OCI-LY7 (cell line): ENCODE measurements at regions of chr10 and their contacts with region 1.

Region 1: GRCh38 chr10:95236068-95236903 is 42.2 kb downstream of the ACSM6 start:
- DNase-seq: peak; percentile 79
- H3K4me3 ChIP-seq: peak overlapping the region; percentile 37
- H3K27ac ChIP-seq: peak overlapping the region; percentile 96
- H3K4me1 ChIP-seq: peaks cover 55% of the 10 kb centered on the region
- CTCF ChIP-seq: peak; percentile 33; the same call in 1 of the 2 replicates

Region 2: DNA sequence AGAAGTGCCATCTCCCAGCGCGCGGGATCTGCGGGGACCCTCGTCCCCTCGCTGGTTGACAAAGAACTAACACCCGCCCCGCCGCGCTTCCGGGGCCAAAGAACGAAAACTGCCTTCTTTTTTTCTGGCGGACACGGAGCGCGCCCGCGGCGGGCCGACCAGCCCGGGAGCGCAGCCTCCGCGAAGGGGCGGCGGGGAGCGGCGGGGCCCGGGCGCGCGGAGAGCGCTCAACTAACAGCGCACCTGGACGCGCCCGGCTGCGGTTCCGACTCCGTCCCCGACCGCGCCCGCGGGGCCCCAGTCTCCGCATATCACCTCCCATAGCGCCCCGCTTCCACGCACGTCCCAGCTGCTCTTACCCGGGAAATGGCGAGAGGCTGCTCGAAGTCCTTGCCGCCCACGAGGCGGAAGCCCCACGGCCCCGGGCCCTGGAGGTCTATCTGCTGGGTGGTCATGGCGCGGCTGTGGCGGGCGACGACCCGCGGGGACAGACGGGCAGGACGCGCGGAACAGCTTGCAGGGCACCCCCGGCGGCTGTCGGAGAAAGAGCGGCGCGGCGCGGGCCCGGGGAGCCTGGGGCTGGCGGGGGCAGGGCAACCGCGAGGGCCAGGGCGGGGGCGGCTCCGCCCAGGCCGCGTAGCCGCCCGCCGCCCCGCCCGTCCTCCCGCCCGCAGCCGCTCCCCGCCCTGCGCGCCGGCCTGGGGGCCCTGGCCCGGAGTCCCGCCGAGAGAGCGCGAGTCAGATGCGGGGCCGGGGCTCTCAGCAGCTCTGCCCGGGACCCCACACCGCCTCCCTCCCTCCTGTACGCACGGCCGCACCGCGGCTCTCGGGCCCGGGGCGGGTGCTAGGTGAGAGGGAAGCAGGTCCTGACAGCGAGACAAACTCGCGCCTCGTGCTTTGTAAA is 54.4 kb after region 1 on chr10 and contains the start of gene PDLIM1:
- CTCF ChIA-PET with region 1: no interaction called
- POLR2A ChIA-PET with region 1: interaction called, 19 read pairs
- intact Hi-C with region 1: loop called (anchors 2 kb)
- DNase-seq: peak; percentile 71
- H3K4me3 ChIP-seq: peak within 1 kb of the TSS; percentile 71
- H3K27ac ChIP-seq: no peak within 1 kb of the TSS
- H3K4me1 ChIP-seq: peaks cover 63% of the 10 kb centered on the region
- CTCF ChIP-seq: 0 out of 2 replicates have a peak, but pooled peaks have one; percentile 28
- total RNA-seq, gene PDLIM1: 22.3 and 23.1 TPM in 2 replicates